ENCODE measurements at regions of chr12 and their contacts with region 1.

Region 1: GRCh38 chr12:13211859-13212664 is 15.5 kb downstream of the EMP1 start:
- DNase-seq: peak; percentile 73
- H3K4me3 Mint-ChIP-seq: peak overlapping the region; percentile 1
- H3K27ac Mint-ChIP-seq: peak overlapping the region; percentile 45
- H3K4me1 Mint-ChIP-seq: peaks cover 50% of the 10 kb centered on the region
- H3K27me3 Mint-ChIP-seq: no peaks in the 10 kb centered on the region
- CTCF ChIP-seq: peak; percentile 48

Region 2: GRCh38 chr12:12927211-12928079 is 284.6 kb before region 1 on chr12:
- CTCF ChIA-PET with region 1: no interaction called
- intact Hi-C with region 1: loop called (anchors 5 kb)
- DNase-seq: peak; percentile 93
- H3K4me3 Mint-ChIP-seq: peak overlapping the region; percentile 68
- H3K27ac Mint-ChIP-seq: peak overlapping the region; percentile 87
- H3K4me1 Mint-ChIP-seq: peaks cover 30% of the 10 kb centered on the region
- H3K27me3 Mint-ChIP-seq: no peaks in the 10 kb centered on the region
- CTCF ChIP-seq: no peak

Region 3: GRCh38 chr12:12983420-12984035 is 228.5 kb before region 1 on chr12:
- CTCF ChIA-PET with region 1: interaction called, 6 read pairs
- intact Hi-C with region 1: loop called (anchors 2 kb)
- DNase-seq: peak; percentile 32
- H3K4me3 Mint-ChIP-seq: no peak overlapping the region
- H3K27ac Mint-ChIP-seq: no peak overlapping the region
- H3K4me1 Mint-ChIP-seq: no peaks in the 10 kb centered on the region
- H3K27me3 Mint-ChIP-seq: no peaks in the 10 kb centered on the region
- CTCF ChIP-seq: peak; percentile 25

Region 4: GRCh38 chr12:13008741-13009380 is 203.2 kb before region 1 on chr12:
- CTCF ChIA-PET with region 1: interaction called, 6 read pairs
- intact Hi-C with region 1: loop called (anchors 5 kb)
- DNase-seq: no peak
- H3K4me3 Mint-ChIP-seq: no peak overlapping the region
- H3K27ac Mint-ChIP-seq: no peak overlapping the region
- H3K4me1 Mint-ChIP-seq: peaks cover 18% of the 10 kb centered on the region
- H3K27me3 Mint-ChIP-seq: peaks cover 98% of the 10 kb centered on the region
- CTCF ChIP-seq: no peak

Region 5: GRCh38 chr12:13173012-13173932 is 38.8 kb before region 1 on chr12:
- CTCF ChIA-PET with region 1: no interaction called
- intact Hi-C with region 1: loop called (anchors 5 kb)
- DNase-seq: peak; percentile 70
- H3K4me3 Mint-ChIP-seq: peak overlapping the region; percentile 25
- H3K27ac Mint-ChIP-seq: peak overlapping the region; percentile 58
- H3K4me1 Mint-ChIP-seq: peaks cover 71% of the 10 kb centered on the region
- H3K27me3 Mint-ChIP-seq: no peaks in the 10 kb centered on the region
- CTCF ChIP-seq: no peak